ENCODE measurements at regions of chr6 and their contacts with region 1.

Region 1: DNA sequence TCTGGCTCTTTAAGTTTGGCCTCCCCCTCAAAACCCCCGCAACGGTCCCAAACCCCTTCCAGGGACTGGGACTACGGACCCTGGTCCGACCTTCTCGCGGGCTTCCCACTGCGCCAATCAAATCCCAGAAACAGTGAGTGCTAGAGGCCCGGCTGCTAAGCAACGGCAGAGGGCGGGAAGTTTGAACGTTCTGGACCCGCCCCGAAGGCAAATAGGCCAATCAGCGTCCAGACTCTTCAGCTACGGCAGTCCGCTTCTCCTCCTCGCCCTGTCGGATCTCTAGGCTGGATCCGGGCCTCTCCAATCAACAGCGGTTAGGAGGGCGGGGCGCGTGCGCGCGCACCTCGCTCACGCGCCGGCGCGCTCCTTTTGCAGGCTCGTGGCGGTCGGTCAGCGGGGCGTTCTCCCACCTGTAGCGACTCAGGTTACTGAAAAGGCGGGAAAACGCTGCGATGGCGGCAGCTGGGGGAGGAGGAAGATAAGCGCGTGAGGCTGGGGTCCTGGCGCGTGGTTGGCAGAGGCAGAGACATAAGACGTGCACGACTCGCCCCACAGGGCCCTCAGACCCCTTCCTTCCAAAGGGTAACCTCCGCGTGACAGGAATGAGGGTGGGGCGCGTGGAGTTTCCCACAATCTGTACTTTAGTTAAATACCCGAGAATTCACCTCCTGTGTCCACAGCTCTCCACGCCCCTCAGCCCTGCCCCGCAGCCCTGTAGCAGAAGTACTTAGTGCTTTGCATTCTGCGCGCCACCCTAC is at the start of gene MSH5:
- DNase-seq: peak; percentile 98
- ATAC-seq: peak; percentile 87
- H3K4me3 Mint-ChIP-seq: peak within 1 kb of the TSS; percentile 96
- H3K27ac Mint-ChIP-seq: peak within 1 kb of the TSS; percentile 86
- H3K4me1 Mint-ChIP-seq: peaks cover 46% of the 10 kb centered on the region
- H3K27me3 Mint-ChIP-seq: no peaks in the 10 kb centered on the region
- total RNA-seq, gene MSH5: 92.1 to 126 TPM

Region 2: GRCh38 chr6:31403283-31403989 is 336.4 kb before region 1 on chr6 and contains the start of gene MICA:
- CTCF ChIA-PET with region 1: no interaction called
- POLR2A ChIA-PET with region 1: no interaction called
- intact Hi-C with region 1: loop called in 1 of 2 experiments (anchors 1 kb)
- DNase-seq: peak; percentile 83
- ATAC-seq: peak; percentile 68
- H3K4me3 Mint-ChIP-seq: peak within 1 kb of the TSS; percentile 71
- H3K27ac Mint-ChIP-seq: peak within 1 kb of the TSS; percentile 71
- H3K4me1 Mint-ChIP-seq: peaks cover 62% of the 10 kb centered on the region
- H3K27me3 Mint-ChIP-seq: no peaks in the 10 kb centered on the region
- total RNA-seq, gene MICA: 6.3 to 7.1 TPM

Region 3: GRCh38 chr6:31665501-31666336 is 74.1 kb before region 1 on chr6 and contains the start of gene CSNK2B:
- CTCF ChIA-PET with region 1: interaction called, 3 read pairs
- POLR2A ChIA-PET with region 1: interaction called, 7 read pairs
- intact Hi-C with region 1: loop called (anchors 1 to 2 kb)
- DNase-seq: peak; percentile 99
- ATAC-seq: peak; percentile 89
- H3K4me3 Mint-ChIP-seq: peak within 1 kb of the TSS; percentile 99
- H3K27ac Mint-ChIP-seq: peak within 1 kb of the TSS; percentile 99
- H3K4me1 Mint-ChIP-seq: peaks cover 66% of the 10 kb centered on the region
- H3K27me3 Mint-ChIP-seq: no peaks in the 10 kb centered on the region
- total RNA-seq, gene CSNK2B: 239 to 346 TPM

Region 4: DNA sequence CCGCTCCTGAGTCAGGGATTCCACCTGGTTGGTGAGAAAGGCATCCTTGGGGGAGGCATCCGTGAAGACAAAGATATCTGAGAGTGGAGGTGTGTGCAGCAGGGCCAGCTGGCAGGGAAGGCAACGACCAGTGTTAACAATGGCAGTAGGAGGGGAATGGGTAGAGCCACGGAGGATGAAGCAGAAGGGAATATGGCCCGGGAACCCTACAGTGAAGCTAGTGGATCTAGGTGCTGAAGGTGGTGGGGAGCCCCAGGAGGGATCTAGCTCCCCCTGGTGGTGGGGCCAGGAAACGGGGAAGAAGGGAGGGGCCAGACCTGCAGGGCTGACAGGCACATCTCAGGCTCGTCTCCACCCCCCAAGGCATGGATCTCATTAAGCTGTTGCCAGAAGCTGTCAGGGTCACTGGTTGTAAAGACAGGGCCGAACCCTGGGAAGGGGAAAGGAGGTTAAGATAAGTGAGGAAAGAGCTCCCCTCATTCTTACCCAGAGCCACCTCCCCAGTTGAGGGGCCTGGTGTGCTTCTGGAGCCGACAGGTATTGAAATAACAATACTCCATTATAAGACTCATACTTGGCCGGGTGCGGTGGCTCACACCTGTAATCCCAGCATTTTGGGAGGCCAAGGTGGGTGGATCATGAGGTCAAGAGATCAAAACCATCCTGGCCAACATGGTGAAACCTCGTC is 30.0 kb after region 1 on chr6:
- CTCF ChIA-PET with region 1: interaction called, 15 read pairs
- POLR2A ChIA-PET with region 1: interaction called, 6 read pairs
- intact Hi-C with region 1: loop called in 1 of 2 experiments (anchors 5 kb)
- DNase-seq: peak; percentile 91
- ATAC-seq: peak; percentile 88
- H3K4me3 Mint-ChIP-seq: no peak overlapping the region
- H3K27ac Mint-ChIP-seq: peak overlapping the region; percentile 80
- H3K4me1 Mint-ChIP-seq: peaks cover 19% of the 10 kb centered on the region
- H3K27me3 Mint-ChIP-seq: no peaks in the 10 kb centered on the region

Region 5: GRCh38 chr6:31827286-31828079 is 87.7 kb after region 1 on chr6 and contains the start of gene HSPA1B:
- CTCF ChIA-PET with region 1: interaction called, 9 read pairs
- POLR2A ChIA-PET with region 1: interaction called, 3 read pairs
- intact Hi-C with region 1: loop called in 1 of 2 experiments (anchors 1 kb)
- DNase-seq: peak; percentile 97
- ATAC-seq: peak; percentile 83
- H3K4me3 Mint-ChIP-seq: peak within 1 kb of the TSS; percentile 77
- H3K27ac Mint-ChIP-seq: peak within 1 kb of the TSS; percentile 92
- H3K4me1 Mint-ChIP-seq: peaks cover 43% of the 10 kb centered on the region
- H3K27me3 Mint-ChIP-seq: no peaks in the 10 kb centered on the region
- total RNA-seq, gene HSPA1B: 54.6 to 61.1 TPM

Region 6: DNA sequence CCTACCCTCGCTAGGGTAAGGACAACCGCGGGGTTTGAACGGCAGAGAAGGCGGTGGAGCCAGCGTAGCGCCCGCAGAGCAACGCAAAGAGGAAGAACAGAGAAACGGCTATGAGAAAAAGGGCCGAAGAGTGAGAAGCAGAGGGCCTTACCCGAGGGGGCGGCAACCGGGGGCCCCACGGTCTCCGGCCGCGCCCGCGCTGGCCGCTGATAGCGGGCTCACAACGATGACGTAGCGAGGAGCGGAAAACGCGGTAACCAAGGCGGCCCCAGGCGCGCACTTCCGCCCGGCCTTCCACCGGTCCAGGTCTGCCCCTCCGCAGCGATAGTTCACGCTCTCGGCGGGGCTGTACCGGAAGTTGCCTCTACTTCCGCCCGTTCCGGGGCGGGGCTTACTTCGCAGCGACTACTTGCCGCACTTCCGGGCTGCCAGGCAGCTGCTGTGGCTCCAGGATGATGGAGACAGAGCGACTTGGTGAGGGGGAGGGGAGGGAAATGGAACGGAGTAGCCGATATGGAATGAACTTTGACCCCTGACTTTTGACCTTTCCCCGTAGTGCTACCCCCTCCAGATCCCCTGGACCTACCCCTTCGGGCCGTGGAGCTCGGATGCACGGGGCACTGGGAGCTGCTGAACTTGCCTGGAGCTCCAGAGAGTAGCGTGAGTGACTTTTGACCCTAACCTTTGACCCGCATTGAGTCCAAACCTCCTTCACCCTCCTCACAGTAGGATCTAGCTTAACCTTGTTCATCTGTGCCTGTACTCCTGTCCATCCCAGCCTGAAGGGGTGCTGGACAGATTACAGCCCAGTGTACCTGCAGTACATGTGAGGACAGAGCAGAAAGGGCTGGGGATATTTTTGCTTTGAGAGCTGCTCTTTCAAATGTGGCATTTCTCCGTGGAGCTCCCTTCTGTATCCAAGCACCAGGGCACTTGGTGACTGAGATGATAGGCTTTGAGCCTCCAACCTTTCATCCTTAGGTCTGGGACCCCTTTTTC is 219.2 kb after region 1 on chr6 and contains the starts of genes NELFE and SKIC2:
- CTCF ChIA-PET with region 1: no interaction called
- POLR2A ChIA-PET with region 1: no interaction called
- intact Hi-C with region 1: loop called in 1 of 2 experiments (anchors 1 kb)
- DNase-seq: peak; percentile 99
- ATAC-seq: peak; percentile 99
- H3K4me3 Mint-ChIP-seq: peak within 1 kb of the TSS; percentile 95
- H3K27ac Mint-ChIP-seq: peak within 1 kb of the TSS; percentile 98
- H3K4me1 Mint-ChIP-seq: peaks cover 34% of the 10 kb centered on the region
- H3K27me3 Mint-ChIP-seq: no peaks in the 10 kb centered on the region
- total RNA-seq, gene NELFE: 74.3 to 95.1 TPM
- total RNA-seq, gene SKIC2: 90.2 to 104 TPM

Measured in activated CD4-positive, alpha-beta T cell treated with anti-CD3 and anti-CD28 coated beads for 36 hours (primary cell).